Activated CD8-positive, alpha-beta T cell treated with anti-CD3 and anti-CD28 coated beads for 36 hours (primary cell): ENCODE measurements at regions of chr15 and their contacts with region 1.

Region 1: GRCh38 chr15:48963524-48964113 is at the start of gene SHC4:
- DNase-seq: peak; percentile 35
- ATAC-seq: peak; percentile 52
- H3K4me3 Mint-ChIP-seq: peak within 1 kb of the TSS; percentile 78
- H3K27ac Mint-ChIP-seq: peak within 1 kb of the TSS; percentile 65
- H3K4me1 Mint-ChIP-seq: peaks cover 33% of the 10 kb centered on the region
- H3K27me3 Mint-ChIP-seq: peaks cover 31% of the 10 kb centered on the region
- CTCF ChIP-seq: no peak
- total RNA-seq, gene SHC4: 2.5 TPM

Region 2: GRCh38 chr15:48877630-48878595 is 85.7 kb before region 1 on chr15 and contains the start of gene EID1:
- CTCF ChIA-PET with region 1: interaction called, 5 read pairs
- POLR2A ChIA-PET with region 1: interaction called, 9 read pairs
- intact Hi-C with region 1: loop called (anchors 5 kb)
- DNase-seq: peak; percentile 96
- ATAC-seq: peak; percentile 94
- H3K4me3 Mint-ChIP-seq: peak within 1 kb of the TSS; percentile 99
- H3K27ac Mint-ChIP-seq: peak within 1 kb of the TSS; percentile 99
- H3K4me1 Mint-ChIP-seq: peaks cover 33% of the 10 kb centered on the region
- H3K27me3 Mint-ChIP-seq: peaks cover 5% of the 10 kb centered on the region
- CTCF ChIP-seq: no peak
- total RNA-seq, gene EID1: 78.3 to 80.5 TPM

Region 3: GRCh38 chr15:48925714-48926223 is 37.9 kb before region 1 on chr15:
- CTCF ChIA-PET with region 1: no interaction called
- POLR2A ChIA-PET with region 1: interaction called, 4 read pairs
- intact Hi-C with region 1: loop called (anchors 5 kb)
- DNase-seq: peak; percentile 23
- ATAC-seq: peak; percentile 35
- H3K4me3 Mint-ChIP-seq: peak overlapping the region; percentile 41
- H3K27ac Mint-ChIP-seq: peak overlapping the region; percentile 90
- H3K4me1 Mint-ChIP-seq: peaks cover 53% of the 10 kb centered on the region
- H3K27me3 Mint-ChIP-seq: peaks cover 11% of the 10 kb centered on the region
- CTCF ChIP-seq: no peak